SK-N-SH (cell line): ENCODE measurements at regions of chr18 and their contacts with region 1.

Region 1: DNA sequence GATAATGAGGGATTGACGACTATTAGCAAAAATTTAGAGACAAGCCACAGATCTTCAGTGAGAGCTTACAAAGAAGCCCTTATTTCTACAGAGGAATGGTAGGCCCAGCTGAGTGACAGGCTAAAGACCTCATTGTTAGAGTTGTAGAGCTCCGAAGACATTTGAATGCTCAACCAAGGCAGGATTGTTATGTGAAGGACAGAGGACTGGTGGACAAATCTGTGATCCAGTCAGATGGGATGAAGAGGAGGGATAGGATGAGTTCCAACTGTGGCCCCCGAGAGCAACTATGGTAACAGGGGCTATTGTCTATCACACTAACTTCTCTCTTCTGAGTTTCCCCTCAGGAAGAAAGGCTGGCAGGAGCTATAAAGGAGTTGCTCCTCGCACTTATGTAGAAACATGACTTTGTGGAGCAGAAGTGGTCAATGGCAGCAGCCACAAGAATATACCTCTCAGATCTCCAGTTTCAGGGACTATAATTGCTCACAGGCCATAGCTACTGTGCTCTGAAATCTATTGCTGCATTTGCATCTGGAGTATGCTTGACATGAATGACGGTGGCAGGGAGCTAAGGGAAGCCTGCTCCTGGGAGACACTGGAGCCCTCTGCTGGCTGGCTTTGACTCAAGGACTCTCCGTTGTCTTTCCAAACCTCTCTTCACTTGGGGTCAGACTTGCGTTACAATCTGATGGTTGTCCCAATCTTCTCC is 50.3 kb upstream of the GREB1L start:
- DNase-seq: peak; percentile 27
- H3K4me3 ChIP-seq: no peak overlapping the region; a peak in 1 of 4 replicates
- H3K27ac ChIP-seq: no peak overlapping the region
- H3K4me1 ChIP-seq: no peaks in the 10 kb centered on the region
- H3K27me3 ChIP-seq: peaks cover 17% of the 10 kb centered on the region; the same call in 1 of the 2 replicates
- CTCF ChIP-seq: peak; percentile 71
- EP300 ChIP-seq: no peak
- RAD21 ChIP-seq: peak; percentile 58

Region 2: GRCh38 chr18:21057112-21057511 is 134.6 kb before region 1 on chr18:
- CTCF ChIA-PET with region 1: no interaction called
- POLR2A ChIA-PET with region 1: no interaction called
- DNase-seq: no peak
- H3K4me3 ChIP-seq: no peak overlapping the region
- H3K27ac ChIP-seq: no peak overlapping the region
- H3K4me1 ChIP-seq: peaks cover 0 to 4% of the 10 kb centered on the region in 2 experiments; a peak in 1 of 4 replicates
- H3K27me3 ChIP-seq: no peaks in the 10 kb centered on the region
- CTCF ChIP-seq: no peak
- EP300 ChIP-seq: no peak
- RAD21 ChIP-seq: no peak

Region 3: DNA sequence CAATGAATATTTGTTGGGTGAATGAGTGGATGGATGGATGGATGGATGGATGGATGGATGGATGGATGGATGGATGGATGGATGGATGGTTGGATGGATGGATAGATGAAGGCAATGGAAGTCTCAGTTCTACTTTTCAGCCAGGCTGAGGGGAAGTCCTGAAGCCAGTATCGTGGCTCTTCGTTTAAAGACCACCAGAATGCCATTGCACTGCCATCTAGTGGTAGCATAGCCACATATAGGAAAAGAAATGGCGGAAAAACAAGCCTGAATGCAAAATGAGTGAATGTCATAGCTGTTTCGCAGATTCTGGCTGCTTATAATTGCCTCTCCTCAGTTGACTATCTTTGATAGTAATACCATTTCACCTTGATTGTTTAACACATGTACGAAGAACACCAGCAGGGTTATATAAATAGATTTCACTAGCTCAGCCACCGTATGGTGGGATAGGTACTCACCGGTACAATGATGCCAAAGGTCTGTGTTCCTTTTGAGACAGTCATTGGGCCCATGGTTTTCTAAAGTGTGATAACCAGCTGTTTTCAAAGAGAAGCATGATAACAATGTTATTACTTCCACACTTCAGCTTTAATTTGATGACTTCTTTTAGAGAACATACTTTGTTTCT is 12.0 kb before region 1 on chr18:
- CTCF ChIA-PET with region 1: interaction called, 12 read pairs
- POLR2A ChIA-PET with region 1: no interaction called
- DNase-seq: peak; percentile 45
- H3K4me3 ChIP-seq: peak overlapping the region in 1 of 2 experiments; percentile 4; a peak in 1 of 4 replicates
- H3K27ac ChIP-seq: no peak overlapping the region
- H3K4me1 ChIP-seq: no peaks in the 10 kb centered on the region
- H3K27me3 ChIP-seq: no peaks in the 10 kb centered on the region
- CTCF ChIP-seq: peak; percentile 87
- EP300 ChIP-seq: no peak
- RAD21 ChIP-seq: peak; percentile 84

Region 4: DNA sequence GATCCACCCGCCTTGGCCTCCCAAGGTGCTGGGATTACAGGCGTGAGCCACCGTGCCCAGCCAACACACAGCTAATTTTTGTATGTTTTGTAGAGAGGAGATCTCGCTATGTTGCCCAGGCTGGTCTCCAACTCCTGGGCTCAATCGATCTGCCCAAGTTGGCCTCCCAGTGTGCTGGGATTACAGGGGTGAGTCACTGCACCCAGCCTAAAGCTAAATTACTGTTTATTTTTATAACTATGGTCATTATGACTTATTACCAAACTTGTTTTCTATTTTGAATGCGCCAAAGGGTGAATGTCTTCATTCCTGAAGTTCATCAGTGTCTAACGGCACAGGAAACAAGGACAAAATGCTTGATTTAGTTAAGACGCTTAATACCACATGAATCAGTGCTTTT is 11.3 kb after region 1 on chr18:
- CTCF ChIA-PET with region 1: interaction called, 12 read pairs
- POLR2A ChIA-PET with region 1: no interaction called
- DNase-seq: no peak
- H3K4me3 ChIP-seq: no peak overlapping the region
- H3K27ac ChIP-seq: no peak overlapping the region
- H3K4me1 ChIP-seq: no peaks in the 10 kb centered on the region
- H3K27me3 ChIP-seq: peaks cover 12% of the 10 kb centered on the region; the same call in 1 of the 2 replicates
- CTCF ChIP-seq: no peak
- EP300 ChIP-seq: no peak
- RAD21 ChIP-seq: no peak

Region 5: GRCh38 chr18:21215485-21215884 is 23.7 kb after region 1 on chr18:
- CTCF ChIA-PET with region 1: interaction called, 11 read pairs
- POLR2A ChIA-PET with region 1: no interaction called
- DNase-seq: no peak
- H3K4me3 ChIP-seq: no peak overlapping the region
- H3K27ac ChIP-seq: no peak overlapping the region
- H3K4me1 ChIP-seq: no peaks in the 10 kb centered on the region
- H3K27me3 ChIP-seq: peaks cover 38% of the 10 kb centered on the region
- CTCF ChIP-seq: no peak
- EP300 ChIP-seq: no peak
- RAD21 ChIP-seq: no peak

Region 6: DNA sequence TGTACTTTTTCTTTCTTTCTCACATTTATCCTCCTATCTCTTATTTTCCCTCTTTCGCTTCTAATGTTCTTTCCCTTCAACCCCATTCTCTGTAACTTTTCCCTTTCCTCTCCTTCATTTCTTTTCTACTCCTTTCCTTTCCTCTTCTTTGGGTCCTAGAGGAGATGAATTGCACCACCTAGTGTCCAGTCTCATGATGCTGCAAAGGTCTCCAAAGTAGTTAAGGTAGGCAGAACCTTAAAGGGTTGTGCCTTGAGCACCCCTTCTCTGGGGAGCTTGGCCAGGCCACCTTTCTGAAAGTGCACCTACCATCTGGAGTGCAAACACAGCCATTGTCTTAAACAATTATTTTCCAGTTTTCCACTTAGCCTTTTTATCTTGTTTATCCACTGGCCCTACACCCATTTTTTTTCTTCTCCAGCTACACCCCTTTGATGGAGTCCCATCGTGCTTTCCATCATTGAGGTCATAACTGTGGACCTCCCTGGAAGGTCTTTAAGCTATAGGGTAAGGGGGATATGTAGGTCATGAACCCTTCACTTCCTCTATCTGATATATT is 252.8 kb after region 1 on chr18:
- CTCF ChIA-PET with region 1: interaction called, 27 read pairs
- POLR2A ChIA-PET with region 1: no interaction called
- DNase-seq: peak; percentile 33
- H3K4me3 ChIP-seq: no peak overlapping the region; a peak in 1 of 4 replicates
- H3K27ac ChIP-seq: no peak overlapping the region
- H3K4me1 ChIP-seq: no peaks in the 10 kb centered on the region
- H3K27me3 ChIP-seq: peaks cover 33% of the 10 kb centered on the region; the same call in 1 of the 2 replicates
- CTCF ChIP-seq: peak; percentile 81
- EP300 ChIP-seq: no peak
- RAD21 ChIP-seq: peak; percentile 61

Region 7: DNA sequence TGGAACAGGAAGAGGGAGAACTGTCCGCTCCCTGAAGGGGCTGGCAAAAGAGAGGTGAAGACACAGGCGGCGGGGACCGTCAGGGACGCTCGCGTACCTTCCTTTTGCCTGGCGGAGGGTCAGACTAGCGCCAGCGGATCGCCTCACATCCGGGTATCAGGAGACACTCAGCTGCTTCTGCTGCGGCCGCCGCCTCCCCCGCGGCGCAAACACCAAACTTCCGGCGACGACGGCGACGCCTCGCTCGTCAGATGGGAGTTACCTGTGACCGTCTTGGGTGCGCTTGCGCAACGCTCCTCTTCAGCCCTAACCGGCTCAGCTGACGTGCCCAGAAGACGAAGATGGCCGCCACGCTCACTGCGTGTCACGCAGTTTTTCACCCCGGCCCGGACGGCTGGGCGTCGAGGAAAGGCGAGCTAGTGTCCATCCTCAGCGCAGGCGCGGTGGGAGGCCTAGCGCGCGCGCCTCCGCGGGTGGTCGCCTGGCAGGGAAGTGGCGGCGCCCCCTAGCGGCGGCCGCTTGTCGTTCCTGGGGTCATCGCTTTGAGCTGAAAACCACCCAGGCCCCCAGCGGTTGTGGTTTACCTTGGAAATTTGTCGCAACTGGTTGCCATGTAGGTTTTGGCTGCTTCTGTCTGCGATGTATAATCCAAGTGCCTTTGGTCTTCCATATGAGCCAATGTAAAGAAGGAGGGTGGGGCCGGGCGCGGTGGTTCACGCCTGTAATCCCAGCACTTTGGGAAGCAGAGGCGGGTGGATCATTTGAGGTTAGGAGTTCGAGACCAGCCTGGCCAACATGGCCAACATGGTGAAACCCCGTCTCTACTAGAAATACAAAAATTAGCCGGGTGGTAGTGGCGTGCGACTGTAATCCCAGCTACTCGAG is 409.0 kb after region 1 on chr18 and contains the start of gene ESCO1:
- CTCF ChIA-PET with region 1: interaction called, 11 read pairs
- POLR2A ChIA-PET with region 1: no interaction called
- DNase-seq: peak; percentile 95
- H3K4me3 ChIP-seq: peak within 1 kb of the TSS; percentile 89 to 93
- H3K27ac ChIP-seq: peak within 1 kb of the TSS; percentile 96
- H3K4me1 ChIP-seq: peaks cover 3 to 7% of the 10 kb centered on the region in 2 experiments; a peak in 2 of 4 replicates
- H3K27me3 ChIP-seq: no peaks in the 10 kb centered on the region
- CTCF ChIP-seq: peak; percentile 82
- EP300 ChIP-seq: no peak; a peak in 1 of 4 replicates
- RAD21 ChIP-seq: peak; percentile 55
- polyA plus RNA-seq, gene ESCO1: 2.2 and 2.7 TPM in 2 replicates